ENCODE measurements at regions of chr22 and their contacts with region 1.

Region 1: DNA sequence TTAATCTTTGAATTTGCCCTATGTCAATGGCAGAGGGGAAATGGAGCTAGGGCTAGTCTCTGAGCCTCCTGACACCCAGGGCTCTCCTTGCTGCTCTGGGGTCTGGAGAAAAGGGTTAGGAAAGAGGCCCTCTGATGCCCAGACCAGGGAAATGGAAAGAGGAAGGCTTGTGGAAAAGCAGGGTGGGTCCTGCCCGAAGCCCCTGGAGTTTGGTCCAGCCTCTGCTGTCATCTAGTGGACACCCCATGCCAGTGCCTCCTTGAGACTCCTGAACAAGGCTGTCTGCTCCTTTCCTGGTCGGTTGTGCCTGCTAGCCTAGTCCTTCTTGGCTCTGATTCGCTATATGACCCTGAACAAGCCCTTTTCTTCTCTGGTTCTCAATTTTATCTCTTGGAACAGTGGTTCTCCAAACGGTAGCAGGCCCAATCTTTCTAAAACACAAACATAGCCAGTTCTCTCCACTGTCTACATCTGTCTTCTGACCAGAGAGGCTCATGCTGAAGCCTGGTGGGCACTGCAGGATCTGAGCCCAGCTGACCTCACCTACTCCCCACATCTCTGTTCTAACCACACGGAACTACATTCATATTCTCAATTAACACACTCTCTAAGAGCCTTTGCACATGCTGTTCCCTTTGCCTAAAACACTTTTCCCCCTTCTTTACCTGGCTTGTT is 8.8 kb upstream of the PLA2G3 start:
- DNase-seq: peak; percentile 62
- H3K4me3 Mint-ChIP-seq: no peak overlapping the region
- H3K27ac Mint-ChIP-seq: no peak overlapping the region
- H3K4me1 Mint-ChIP-seq: peaks cover 3% of the 10 kb centered on the region
- H3K27me3 Mint-ChIP-seq: peaks cover 3% of the 10 kb centered on the region

Region 2: DNA sequence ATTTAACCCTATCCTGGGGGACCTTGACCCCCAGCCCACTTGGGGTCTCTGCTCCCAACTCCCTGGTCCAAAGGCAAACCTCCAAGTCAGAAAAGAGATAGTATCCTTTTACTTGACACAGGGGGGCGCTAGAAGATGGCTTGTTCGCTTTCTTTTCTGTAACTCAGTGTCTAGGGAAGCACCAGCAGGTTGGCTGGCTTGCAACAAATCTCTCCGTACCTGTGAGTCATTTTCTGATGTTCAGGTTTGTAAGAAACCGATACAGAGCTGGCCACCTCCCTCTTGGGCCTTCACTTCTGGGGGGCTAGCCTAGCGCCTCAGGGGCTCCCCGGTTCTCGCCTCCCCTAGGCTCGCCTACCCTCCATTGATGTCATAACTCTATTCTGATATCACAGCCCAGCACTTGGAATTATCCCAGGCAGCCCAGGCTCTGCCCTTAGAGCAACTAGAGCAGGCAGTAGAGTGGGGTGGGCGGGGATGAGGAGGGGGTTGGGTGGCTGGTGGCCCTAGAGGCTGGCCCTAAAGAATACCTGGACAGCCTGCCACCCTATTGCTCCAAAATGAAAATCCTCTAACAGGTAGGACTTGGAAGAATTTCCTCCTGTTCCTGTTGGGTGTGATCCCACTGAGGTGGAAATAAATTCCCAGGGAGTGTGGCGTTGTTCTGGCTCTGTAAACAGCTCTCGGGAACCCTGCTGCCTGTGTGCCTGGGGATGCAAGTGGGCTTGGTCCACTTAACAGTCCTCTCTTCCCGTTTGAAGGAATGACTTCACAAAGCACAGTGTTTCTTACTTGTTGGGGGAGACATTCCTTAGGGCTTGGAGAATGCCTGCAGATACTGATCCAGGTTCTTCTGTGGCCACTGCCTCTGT is 385.0 kb before region 1 on chr22:
- CTCF ChIA-PET with region 1: no interaction called
- intact Hi-C with region 1: loop called (anchors 2 kb)
- DNase-seq: peak; percentile 79
- H3K4me3 Mint-ChIP-seq: no peak overlapping the region
- H3K27ac Mint-ChIP-seq: no peak overlapping the region
- H3K4me1 Mint-ChIP-seq: peaks cover 2% of the 10 kb centered on the region
- H3K27me3 Mint-ChIP-seq: no peaks in the 10 kb centered on the region

Region 3: GRCh38 chr22:30947816-30948454 is 201.2 kb before region 1 on chr22:
- CTCF ChIA-PET with region 1: interaction called, 3 read pairs
- intact Hi-C with region 1: loop called (anchors 1 kb)
- DNase-seq: no peak
- H3K4me3 Mint-ChIP-seq: no peak overlapping the region
- H3K27ac Mint-ChIP-seq: no peak overlapping the region
- H3K4me1 Mint-ChIP-seq: peaks cover 60% of the 10 kb centered on the region
- H3K27me3 Mint-ChIP-seq: no peaks in the 10 kb centered on the region

Region 4: GRCh38 chr22:31089160-31090100 is 59.7 kb before region 1 on chr22:
- CTCF ChIA-PET with region 1: interaction called, 4 read pairs
- intact Hi-C with region 1: loop called (anchors 1 kb)
- DNase-seq: no peak
- H3K4me3 Mint-ChIP-seq: no peak overlapping the region
- H3K27ac Mint-ChIP-seq: no peak overlapping the region
- H3K4me1 Mint-ChIP-seq: peaks cover 2% of the 10 kb centered on the region
- H3K27me3 Mint-ChIP-seq: no peaks in the 10 kb centered on the region

Region 5: DNA sequence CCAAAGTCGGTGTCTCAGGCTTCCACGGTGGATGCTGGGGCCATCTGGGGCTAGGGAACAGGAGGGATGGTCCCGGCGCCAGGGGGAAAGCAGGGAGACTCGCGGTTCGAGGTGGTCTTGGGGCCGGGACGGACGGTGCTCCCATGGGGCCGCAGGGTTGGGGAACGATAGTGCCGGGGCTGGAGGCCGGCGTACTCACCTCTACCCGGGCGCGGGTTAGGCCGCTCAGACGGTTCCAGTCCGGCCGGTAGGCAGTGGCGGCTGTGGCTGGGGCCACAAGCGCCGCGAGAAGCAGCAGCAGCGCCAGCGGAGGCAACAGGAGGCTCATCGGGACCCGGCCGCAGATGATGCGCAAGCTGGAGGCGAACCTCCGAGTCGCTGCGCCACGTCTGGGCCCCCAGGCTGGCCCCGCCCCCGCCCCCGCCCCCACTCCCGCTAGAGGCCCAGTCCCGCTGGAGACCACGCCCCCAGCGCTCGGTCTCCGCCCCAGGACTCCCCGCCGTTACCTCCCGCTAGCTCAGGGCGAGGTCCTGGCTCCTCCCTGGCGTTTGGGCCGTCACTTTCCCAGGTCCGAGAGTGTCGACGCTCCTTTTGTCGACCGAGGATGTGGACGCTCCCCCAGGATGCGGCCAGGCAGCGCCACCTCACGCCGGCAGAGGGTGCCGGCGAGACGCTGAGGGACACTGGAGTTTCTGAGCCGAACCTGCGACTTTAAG is 41.8 kb before region 1 on chr22 and contains the start of gene SELENOM:
- CTCF ChIA-PET with region 1: interaction called, 4 read pairs
- intact Hi-C with region 1: loop called (anchors 5 kb)
- DNase-seq: peak; percentile 92
- H3K4me3 Mint-ChIP-seq: peak within 1 kb of the TSS; percentile 89
- H3K27ac Mint-ChIP-seq: peak within 1 kb of the TSS; percentile 76
- H3K4me1 Mint-ChIP-seq: peaks cover 19% of the 10 kb centered on the region
- H3K27me3 Mint-ChIP-seq: no peaks in the 10 kb centered on the region
- total RNA-seq, gene SELENOM: 9.3 to 11.0 TPM

Region 6: DNA sequence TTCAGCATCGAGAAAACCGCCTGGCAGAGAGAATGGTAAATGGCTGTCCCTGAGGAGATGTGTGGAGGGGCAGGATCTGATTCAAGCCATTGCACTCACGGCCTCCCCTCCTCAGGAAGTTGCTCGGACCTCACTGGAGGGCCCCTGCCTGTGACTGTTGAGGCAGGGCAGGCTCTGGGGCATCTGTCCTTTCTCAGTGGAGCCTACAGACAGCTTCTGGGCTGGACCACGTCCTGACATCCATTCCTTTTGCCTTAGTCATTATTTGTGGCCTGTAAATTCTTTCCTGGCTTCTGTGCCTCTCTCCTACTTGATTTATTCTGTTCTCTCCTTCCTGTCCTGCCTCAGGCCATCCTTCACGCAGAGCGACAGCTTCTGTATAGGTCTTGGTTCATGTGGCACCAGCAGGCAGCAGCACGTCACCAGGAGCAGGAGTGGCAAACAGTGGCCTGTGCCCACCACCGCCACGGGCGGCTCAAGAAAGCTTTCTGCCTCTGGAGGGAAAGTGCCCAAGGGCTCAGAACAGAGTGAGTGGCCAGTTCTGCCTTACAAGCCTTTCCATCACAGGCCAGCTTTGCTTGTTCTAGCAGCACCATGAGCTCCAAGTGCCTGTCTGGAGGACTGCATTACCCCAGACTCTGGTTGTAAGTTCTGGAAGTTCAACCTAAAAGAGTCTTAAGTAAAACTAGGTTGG is 453.3 kb after region 1 on chr22:
- CTCF ChIA-PET with region 1: no interaction called
- intact Hi-C with region 1: no loop called
- DNase-seq: no peak
- H3K4me3 Mint-ChIP-seq: no peak overlapping the region
- H3K27ac Mint-ChIP-seq: no peak overlapping the region
- H3K4me1 Mint-ChIP-seq: no peaks in the 10 kb centered on the region
- H3K27me3 Mint-ChIP-seq: no peaks in the 10 kb centered on the region

Measured in activated naive CD4-positive, alpha-beta T cell treated with anti-CD3 and anti-CD28 coated beads for 36 hours (primary cell).